Cardiac septum (tissue), 1 donor: ENCODE measurements at regions of chrX and their contacts with region 1.

Region 1: GRCh38 chrX:129996120-129996519 is 13.7 kb downstream of the BCORL1 start:
- DNase-seq: no peak

Region 2: DNA sequence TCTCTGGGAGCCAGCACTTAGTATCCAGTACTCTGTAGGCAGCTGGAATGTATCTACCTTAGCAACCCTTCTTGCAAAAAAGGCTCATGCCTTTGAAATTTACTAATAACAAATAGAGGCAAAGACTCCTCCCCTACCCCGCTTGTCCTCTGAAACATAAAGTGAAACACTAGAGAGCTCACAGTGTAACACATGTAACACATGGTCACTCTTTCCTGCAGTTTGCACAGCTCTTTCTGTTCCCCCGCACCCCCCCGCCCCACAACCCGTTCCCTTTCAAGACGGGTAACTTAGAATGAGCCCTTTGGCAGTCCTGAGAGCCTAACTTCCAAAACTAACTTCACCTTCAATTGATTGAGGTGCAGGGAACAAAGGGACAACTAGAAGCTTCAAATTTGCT is 19.7 kb before region 1 on chrX:
- intact Hi-C with region 1: loop called (anchors 2 kb)
- DNase-seq: no peak